ENCODE measurements at regions of chr11 and their contacts with region 1.

Region 1: DNA sequence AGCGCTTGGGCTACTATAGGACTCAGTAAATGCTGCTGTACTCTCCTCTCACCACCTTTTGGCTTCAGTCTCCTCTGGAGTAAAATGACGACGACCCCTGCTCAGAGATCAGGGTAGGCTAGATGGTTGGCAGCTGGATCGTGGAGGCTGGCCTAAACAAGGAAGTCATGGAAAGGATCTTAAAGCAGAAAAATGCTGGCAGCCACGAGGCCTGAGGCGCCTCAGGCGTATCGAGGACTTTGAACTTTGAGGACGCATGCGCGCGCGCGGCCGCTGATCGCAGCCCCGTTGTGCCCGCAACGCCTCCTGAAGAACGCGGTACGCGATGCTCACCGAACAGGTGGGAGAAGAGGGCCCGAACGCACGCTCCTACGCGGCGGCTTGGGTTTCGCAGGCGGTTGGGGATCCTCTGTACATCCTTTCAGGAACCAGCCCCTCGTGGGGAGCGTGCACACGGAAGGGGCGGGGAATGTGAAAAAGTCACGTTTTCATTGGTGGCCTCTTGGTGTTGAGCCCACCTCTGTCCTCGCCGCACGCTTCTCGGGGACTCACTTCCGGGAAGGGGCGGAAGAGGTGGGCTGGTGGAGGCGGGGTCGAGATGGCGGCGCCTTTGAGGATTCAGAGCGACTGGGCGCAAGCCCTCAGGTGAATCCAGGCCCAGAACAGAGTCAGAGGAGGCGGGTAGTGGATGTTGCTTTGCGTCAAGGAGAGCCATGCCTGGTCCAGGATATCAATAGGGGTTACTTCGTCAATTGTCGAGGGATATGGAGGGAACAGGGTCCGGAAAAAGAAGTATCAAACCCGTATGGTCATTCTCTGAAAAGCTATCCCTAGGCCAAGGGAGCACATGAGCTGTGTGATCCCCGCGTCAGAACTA is at the starts of genes COA4 and PAAF1:
- DNase-seq: peak; percentile 80
- ATAC-seq: peak; percentile 98
- H3K4me3 Mint-ChIP-seq: peak within 1 kb of the TSS; percentile 99
- H3K27ac Mint-ChIP-seq: peak within 1 kb of the TSS; percentile 98
- H3K4me1 Mint-ChIP-seq: peaks cover 34% of the 10 kb centered on the region
- H3K27me3 Mint-ChIP-seq: no peaks in the 10 kb centered on the region
- CTCF ChIP-seq: no peak
- total RNA-seq, gene COA4: 75.9 and 79.8 TPM in 2 replicates
- total RNA-seq, gene PAAF1: 19.6 and 20.2 TPM in 2 replicates

Region 2: DNA sequence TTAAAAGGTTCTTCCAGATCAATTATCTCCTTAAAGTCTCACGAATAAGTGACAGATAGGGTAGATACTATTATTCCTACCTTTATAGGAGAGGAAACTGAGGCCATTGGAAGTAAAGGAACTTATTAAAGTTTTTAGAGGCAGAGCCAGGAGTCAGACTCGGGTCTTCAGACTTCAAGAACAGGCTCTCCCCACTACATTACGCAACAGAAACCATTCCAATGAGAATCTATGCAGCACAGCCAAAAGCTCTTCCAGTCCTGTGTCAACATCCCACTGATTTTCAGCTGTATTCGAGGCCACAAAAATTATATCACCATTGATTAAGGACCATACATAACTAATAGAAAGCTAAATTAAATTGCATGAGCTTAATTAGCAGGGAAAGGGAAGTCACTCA is 423.1 kb before region 1 on chr11:
- CTCF ChIA-PET with region 1: no interaction called
- POLR2A ChIA-PET with region 1: no interaction called
- intact Hi-C with region 1: no loop called
- DNase-seq: no peak
- ATAC-seq: no peak
- H3K4me3 Mint-ChIP-seq: no peak overlapping the region
- H3K27ac Mint-ChIP-seq: no peak overlapping the region
- H3K4me1 Mint-ChIP-seq: no peaks in the 10 kb centered on the region
- H3K27me3 Mint-ChIP-seq: no peaks in the 10 kb centered on the region
- CTCF ChIP-seq: no peak

Region 3: DNA sequence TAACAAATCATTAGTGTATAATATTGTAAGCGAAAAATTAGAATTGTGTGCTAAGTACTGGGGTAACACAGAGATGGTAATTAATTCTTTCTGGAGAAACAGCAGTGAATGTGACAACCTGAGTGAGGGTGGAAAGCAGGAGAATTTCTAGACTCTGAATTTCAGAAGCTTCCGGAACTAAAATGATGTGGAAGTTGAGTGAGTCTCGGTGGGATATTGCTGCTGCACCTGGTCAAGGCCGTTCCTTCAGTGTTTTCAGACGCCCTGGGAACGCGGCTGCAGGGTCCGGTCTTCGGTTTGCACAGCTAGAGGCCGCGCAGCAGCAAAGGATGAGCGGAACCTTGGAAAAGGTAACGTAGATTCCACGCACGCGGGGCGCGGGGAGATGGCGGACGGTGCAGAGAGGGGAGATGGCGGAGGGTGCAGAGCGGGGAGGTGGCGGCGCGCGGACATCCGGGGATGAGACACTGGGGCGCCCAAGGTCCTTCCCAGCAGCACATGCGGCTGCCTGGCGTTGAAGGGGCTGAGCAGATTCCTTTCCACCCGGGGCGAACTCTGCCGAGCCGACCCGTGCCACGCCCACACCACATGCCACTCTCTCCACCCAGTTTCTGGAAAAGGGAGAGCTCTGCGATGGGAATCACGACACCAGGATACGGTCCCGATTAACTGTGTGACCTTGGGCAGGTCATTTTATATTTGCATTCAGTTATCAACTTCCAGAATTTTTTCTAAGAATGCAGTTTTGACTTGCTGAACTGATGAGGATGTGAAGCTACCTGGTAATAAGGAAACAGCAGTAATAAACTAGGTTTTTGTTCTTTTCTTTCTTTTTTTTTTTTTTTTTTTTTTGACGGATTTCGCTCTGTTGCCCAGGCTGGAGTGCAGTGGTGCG is 88.8 kb before region 1 on chr11 and contains the start of gene MRPL48:
- CTCF ChIA-PET with region 1: no interaction called
- POLR2A ChIA-PET with region 1: no interaction called
- intact Hi-C with region 1: loop called (anchors 1 kb)
- DNase-seq: peak; percentile 84
- ATAC-seq: peak; percentile 100
- H3K4me3 Mint-ChIP-seq: peak within 1 kb of the TSS; percentile 100
- H3K27ac Mint-ChIP-seq: peak within 1 kb of the TSS; percentile 100
- H3K4me1 Mint-ChIP-seq: peaks cover 15% of the 10 kb centered on the region
- H3K27me3 Mint-ChIP-seq: no peaks in the 10 kb centered on the region
- CTCF ChIP-seq: no peak
- total RNA-seq, gene MRPL48: 38.3 and 40.6 TPM in 2 replicates

Region 4: GRCh38 chr11:73833067-73833466 is 43.6 kb before region 1 on chr11:
- CTCF ChIA-PET with region 1: no interaction called
- POLR2A ChIA-PET with region 1: no interaction called
- intact Hi-C with region 1: no loop called
- DNase-seq: no peak
- ATAC-seq: no peak
- H3K4me3 Mint-ChIP-seq: no peak overlapping the region
- H3K27ac Mint-ChIP-seq: no peak overlapping the region
- H3K4me1 Mint-ChIP-seq: no peaks in the 10 kb centered on the region
- H3K27me3 Mint-ChIP-seq: no peaks in the 10 kb centered on the region
- CTCF ChIP-seq: no peak

Measured in activated B cell treated with CpG ODN at 0.5 μM for 24 hours (primary cell).